Activated T-helper 2 cell treated with anti-CD3 and anti-CD28 coated beads, Interferon-gamma antibody, Interleukin-2, Interleukin-4, amounts not matched to agents 10 μg/mL and 5 μg/mL and 100 μg/mL, durations not matched to agents 14 hours and 24 hours and 36 hours (primary cell): ENCODE measurements at regions of chr1 and their contacts with region 1.

Region 1: GRCh38 chr1:225977937-225978748 is 21.0 kb downstream of the SDE2 start:
- DNase-seq: no peak
- H3K4me3 Mint-ChIP-seq: no peak overlapping the region
- H3K27ac Mint-ChIP-seq: no peak overlapping the region
- H3K4me1 Mint-ChIP-seq: peaks cover 4% of the 10 kb centered on the region
- H3K27me3 Mint-ChIP-seq: no peaks in the 10 kb centered on the region

Region 2: GRCh38 chr1:225318706-225319575 is 659.2 kb before region 1 on chr1:
- intact Hi-C with region 1: loop called (anchors 5 kb)
- DNase-seq: no peak
- H3K4me3 Mint-ChIP-seq: no peak overlapping the region
- H3K27ac Mint-ChIP-seq: no peak overlapping the region
- H3K4me1 Mint-ChIP-seq: no peaks in the 10 kb centered on the region
- H3K27me3 Mint-ChIP-seq: peaks cover 8% of the 10 kb centered on the region

Region 3: DNA sequence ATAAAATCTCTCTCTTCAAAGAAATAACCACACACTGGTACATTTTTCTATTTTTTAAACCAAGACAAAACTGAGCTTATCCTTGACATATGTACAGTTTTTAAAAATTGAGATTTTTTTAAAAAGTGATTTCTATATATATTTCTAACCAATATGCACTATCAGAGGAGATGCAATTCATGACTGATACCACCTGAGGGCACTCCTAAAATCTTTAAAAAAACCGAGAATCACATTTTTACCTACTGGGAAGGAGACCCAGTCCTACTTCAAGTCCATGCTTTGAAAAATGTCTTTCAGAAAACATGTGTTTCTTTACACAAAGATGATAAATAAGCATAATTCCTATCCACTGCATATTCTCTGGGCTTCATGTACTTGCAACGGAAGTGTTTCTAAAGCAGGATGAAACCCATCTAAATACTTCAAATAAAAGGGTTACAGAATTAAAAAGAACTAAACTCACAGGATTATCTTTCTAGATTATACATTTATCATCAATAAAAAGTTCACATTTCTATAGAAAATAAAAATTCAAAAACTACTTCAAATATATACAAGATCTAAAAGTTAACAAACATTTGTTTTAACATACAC is 423.8 kb before region 1 on chr1:
- intact Hi-C with region 1: loop called (anchors 5 kb)
- DNase-seq: no peak
- H3K4me3 Mint-ChIP-seq: no peak overlapping the region
- H3K27ac Mint-ChIP-seq: no peak overlapping the region
- H3K4me1 Mint-ChIP-seq: no peaks in the 10 kb centered on the region
- H3K27me3 Mint-ChIP-seq: peaks cover 7% of the 10 kb centered on the region